ENCODE measurements at regions of chr1 and their contacts with region 1.

Region 1: GRCh38 chr1:230867903-230868735 is at the start of gene C1orf198:
- DNase-seq: peak; percentile 63 to 97 (median 94)
- ATAC-seq: peak; percentile 91
- H3K4me3 ChIP-seq: peak within 1 kb of the TSS; percentile 75
- H3K27ac ChIP-seq: peak within 1 kb of the TSS; percentile 51
- H3K4me1 ChIP-seq: peaks cover 18 to 26% of the 10 kb centered on the region in 2 experiments; a peak in 4 of 5 replicates
- H3K27me3 ChIP-seq: no peaks in the 10 kb centered on the region
- CTCF ChIP-seq: no peak
- EP300 ChIP-seq: no peak
- POLR2A ChIP-seq: peak; percentile 66
- RAD21 ChIP-seq: no peak
- polyA plus RNA-seq, gene C1orf198: 2.0 to 2.2 TPM

Region 2: DNA sequence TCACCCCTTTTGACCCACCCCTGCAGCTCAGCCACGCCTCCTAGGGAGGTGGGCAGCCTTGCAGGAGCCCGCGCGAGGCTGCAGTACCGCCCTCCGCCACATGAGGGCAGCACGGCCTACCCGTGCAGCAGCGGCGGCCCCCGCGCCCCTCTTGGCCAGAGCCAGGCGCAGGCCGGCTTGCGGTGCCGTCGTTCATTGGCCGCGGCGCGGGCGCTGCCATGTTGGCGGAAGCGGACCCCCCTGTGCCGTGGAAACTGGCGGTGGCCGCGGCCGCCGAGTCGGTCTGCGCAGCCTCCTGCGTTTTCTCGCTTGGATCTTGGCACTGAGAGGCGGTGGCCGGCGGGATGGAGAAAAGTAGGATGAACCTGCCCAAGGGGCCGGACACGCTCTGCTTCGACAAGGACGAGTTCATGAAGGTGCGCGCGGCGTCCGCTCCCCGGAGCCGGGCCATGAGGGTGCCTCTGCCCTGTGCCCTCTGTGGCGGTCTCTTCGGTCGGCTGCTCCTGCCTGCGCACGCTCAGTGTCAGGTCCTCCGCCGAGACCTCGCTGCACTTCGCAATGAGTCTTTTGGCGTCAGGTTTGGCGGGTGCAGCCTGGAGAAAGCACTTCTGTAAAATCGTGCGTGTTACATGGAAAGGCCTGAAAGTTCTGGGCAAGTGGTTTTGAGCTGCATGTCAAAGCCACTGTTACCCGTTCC is 225.7 kb before region 1 on chr1 and contains the start of gene COG2:
- CTCF ChIA-PET with region 1: no interaction called
- POLR2A ChIA-PET with region 1: no interaction called
- in situ Hi-C with region 1: no loop called
- intact Hi-C with region 1: loop called (anchors 10 kb)
- DNase-seq: peak; percentile 97 to 98 (median 98)
- ATAC-seq: peak; percentile 99
- H3K4me3 ChIP-seq: peak within 1 kb of the TSS; percentile 97
- H3K27ac ChIP-seq: peak within 1 kb of the TSS; percentile 82
- H3K4me1 ChIP-seq: peaks cover 9 to 35% of the 10 kb centered on the region in 2 experiments; a peak in 4 of 5 replicates
- H3K27me3 ChIP-seq: peaks cover 4 to 16% of the 10 kb centered on the region in 2 experiments
- CTCF ChIP-seq: peak; percentile 97 to 99 (median 99)
- EP300 ChIP-seq: peak; percentile 41; the same call in 1 of the 2 replicates
- POLR2A ChIP-seq: peak; percentile 95
- RAD21 ChIP-seq: peak; percentile 39 to 54; a peak in 3 of 4 replicates
- polyA plus RNA-seq, gene COG2: 22.0 to 31.3 TPM

Region 3: GRCh38 chr1:230853731-230854130 is 14.4 kb before region 1 on chr1:
- CTCF ChIA-PET with region 1: no interaction called
- POLR2A ChIA-PET with region 1: interaction called, 13 read pairs
- in situ Hi-C with region 1: no loop called
- intact Hi-C with region 1: no loop called
- DNase-seq: no peak
- ATAC-seq: no peak
- H3K4me3 ChIP-seq: no peak overlapping the region
- H3K27ac ChIP-seq: no peak overlapping the region
- H3K4me1 ChIP-seq: peaks cover 4 to 8% of the 10 kb centered on the region in 2 experiments; a peak in 3 of 5 replicates
- H3K27me3 ChIP-seq: peaks cover 0 to 5% of the 10 kb centered on the region in 2 experiments; a peak in 1 of 5 replicates
- CTCF ChIP-seq: no peak
- EP300 ChIP-seq: no peak
- POLR2A ChIP-seq: no peak
- RAD21 ChIP-seq: no peak

Region 4: DNA sequence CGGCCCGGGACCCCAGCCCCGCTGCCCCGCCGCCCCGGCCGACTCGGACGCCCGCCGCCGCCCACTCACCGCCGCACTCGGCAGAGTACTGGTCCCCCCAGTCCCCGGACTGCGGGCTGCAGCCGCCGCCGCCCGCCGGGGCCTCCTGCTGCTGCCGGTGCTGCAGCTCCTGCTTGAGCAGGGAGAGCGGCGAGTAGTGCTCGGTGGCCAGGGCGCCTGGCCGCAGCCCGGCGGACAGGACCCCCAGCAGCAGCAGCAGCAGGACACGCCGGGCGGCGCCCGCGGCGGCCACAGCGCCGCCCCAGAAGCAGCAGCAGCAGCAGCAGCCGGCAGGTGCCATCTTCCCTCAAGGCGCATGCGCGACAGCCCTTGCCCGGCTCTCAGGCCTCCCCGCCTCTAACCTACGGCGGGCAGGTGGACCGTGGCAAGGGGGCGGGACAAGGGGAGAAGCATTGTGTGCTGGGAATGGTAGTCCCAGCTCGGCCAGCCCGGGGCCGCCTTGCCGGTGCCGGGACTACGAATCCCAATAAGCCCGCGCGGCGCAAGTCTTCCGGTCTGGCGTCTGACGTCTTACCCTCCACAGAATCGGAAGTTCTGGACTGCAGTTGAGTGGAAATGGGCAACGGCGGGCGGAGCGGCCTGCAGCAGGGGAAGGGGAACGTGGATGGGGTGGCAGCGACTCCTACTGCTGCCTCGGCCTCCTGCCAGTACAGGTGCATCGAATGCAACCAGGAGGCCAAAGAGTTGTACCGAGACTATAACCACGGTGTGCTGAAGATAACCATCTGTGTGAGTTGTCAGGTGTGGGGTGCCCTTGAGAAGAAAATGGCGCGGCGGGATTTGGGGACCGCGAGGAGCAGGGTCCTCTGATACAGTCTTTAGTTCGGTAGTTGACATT is 110.6 kb after region 1 on chr1 and contains the starts of genes ARV1 and TTC13:
- CTCF ChIA-PET with region 1: no interaction called
- POLR2A ChIA-PET with region 1: no interaction called
- in situ Hi-C with region 1: no loop called
- intact Hi-C with region 1: loop called (anchors 5 kb)
- DNase-seq: peak; percentile 99 to 100 (median 99)
- ATAC-seq: peak; percentile 99
- H3K4me3 ChIP-seq: peak within 1 kb of the TSS; percentile 62
- H3K27ac ChIP-seq: peak within 1 kb of the TSS; percentile 75
- H3K4me1 ChIP-seq: peaks cover 21 to 40% of the 10 kb centered on the region in 2 experiments; a peak in 4 of 5 replicates
- H3K27me3 ChIP-seq: no peaks in the 10 kb centered on the region
- CTCF ChIP-seq: peak; percentile 38 to 53 (median 52); a peak in 5 of 6 replicates
- EP300 ChIP-seq: peak; percentile 33; the same call in 1 of the 2 replicates
- POLR2A ChIP-seq: peak; percentile 97
- RAD21 ChIP-seq: peak; percentile 21 to 41; a peak in 3 of 4 replicates
- polyA plus RNA-seq, gene ARV1: 61.9 to 71.0 TPM
- polyA plus RNA-seq, gene TTC13: 1.7 to 2.2 TPM

Region 5: GRCh38 chr1:231240883-231241735 is 373.0 kb after region 1 on chr1 and contains the start of gene GNPAT:
- CTCF ChIA-PET with region 1: no interaction called
- POLR2A ChIA-PET with region 1: no interaction called
- in situ Hi-C with region 1: no loop called
- intact Hi-C with region 1: no loop called
- DNase-seq: peak; percentile 95 to 99 (median 98)
- ATAC-seq: peak; percentile 98
- H3K4me3 ChIP-seq: peak within 1 kb of the TSS; percentile 62
- H3K27ac ChIP-seq: peak within 1 kb of the TSS; percentile 81
- H3K4me1 ChIP-seq: peaks cover 5 to 18% of the 10 kb centered on the region in 2 experiments; a peak in 3 of 5 replicates
- H3K27me3 ChIP-seq: no peaks in the 10 kb centered on the region
- CTCF ChIP-seq: peak in 1 of 3 experiments; percentile 20; a peak in 1 of 6 replicates
- EP300 ChIP-seq: no peak
- POLR2A ChIP-seq: peak; percentile 97
- RAD21 ChIP-seq: no peak
- polyA plus RNA-seq, gene GNPAT: 32.1 to 49.8 TPM

Measured in K562 (cell line).